ENCODE measurements at regions of chr1 and their contacts with region 1.

Region 1: DNA sequence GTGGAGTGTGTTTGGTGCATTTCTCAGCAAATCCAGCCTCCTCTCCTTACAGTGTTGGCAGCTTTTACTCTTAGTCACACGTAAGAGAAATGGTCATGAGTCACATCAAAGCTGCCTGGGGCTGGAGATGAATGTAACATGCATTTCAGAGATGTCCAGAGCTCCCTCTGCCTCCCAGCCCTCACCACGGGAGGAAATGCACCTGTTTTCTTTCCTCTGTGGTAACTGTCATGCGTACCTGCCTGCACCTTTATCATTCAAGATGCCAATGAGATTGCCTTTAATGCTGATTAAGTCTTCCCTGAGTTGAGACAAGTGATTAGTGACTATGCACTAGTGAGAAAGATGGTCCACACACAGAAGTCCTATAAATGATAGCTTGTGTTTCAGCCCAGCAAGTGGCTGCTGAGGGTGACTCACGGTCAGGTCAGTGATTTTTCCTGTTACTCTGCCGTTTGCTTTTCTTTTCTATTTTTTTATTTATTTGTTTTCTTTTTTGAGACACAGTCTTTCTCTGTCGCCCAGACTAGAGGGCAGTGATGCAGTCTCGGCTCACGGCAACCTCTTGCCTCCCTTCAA is 277.3 kb upstream of the FMN2 start:
- DNase-seq: peak; percentile 68
- H3K4me3 Mint-ChIP-seq: no peak overlapping the region
- H3K27ac Mint-ChIP-seq: no peak overlapping the region
- H3K4me1 Mint-ChIP-seq: peaks cover 29% of the 10 kb centered on the region
- H3K27me3 Mint-ChIP-seq: no peaks in the 10 kb centered on the region

Region 2: DNA sequence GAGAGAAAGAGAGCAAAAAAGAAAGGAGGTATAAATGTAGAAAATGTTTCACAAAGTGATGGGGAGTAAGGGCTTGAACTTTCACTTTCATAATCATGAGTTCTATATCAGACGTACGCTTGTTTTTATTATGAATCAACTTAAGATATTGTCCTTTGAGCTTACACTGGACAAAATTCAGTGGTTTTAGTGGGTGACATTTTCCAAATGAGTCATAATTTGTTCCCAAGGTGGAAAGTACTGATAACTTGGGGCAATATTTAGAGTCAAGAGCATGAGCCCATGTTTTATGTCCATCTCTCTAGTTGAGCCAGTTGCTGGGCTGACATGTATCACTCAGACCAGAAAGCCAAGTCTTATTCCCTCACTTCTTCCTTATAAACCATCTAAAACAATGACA is 266.4 kb before region 1 on chr1:
- CTCF ChIA-PET with region 1: no interaction called
- intact Hi-C with region 1: loop called (anchors 5 kb)
- DNase-seq: no peak
- H3K4me3 Mint-ChIP-seq: no peak overlapping the region
- H3K27ac Mint-ChIP-seq: no peak overlapping the region
- H3K4me1 Mint-ChIP-seq: peaks cover 17% of the 10 kb centered on the region
- H3K27me3 Mint-ChIP-seq: no peaks in the 10 kb centered on the region

Region 3: GRCh38 chr1:239707615-239708014 is 106.8 kb before region 1 on chr1:
- CTCF ChIA-PET with region 1: no interaction called
- intact Hi-C with region 1: loop called (anchors 2 kb)
- DNase-seq: no peak
- H3K4me3 Mint-ChIP-seq: no peak overlapping the region
- H3K27ac Mint-ChIP-seq: no peak overlapping the region
- H3K4me1 Mint-ChIP-seq: peaks cover 50% of the 10 kb centered on the region
- H3K27me3 Mint-ChIP-seq: no peaks in the 10 kb centered on the region

Region 4: DNA sequence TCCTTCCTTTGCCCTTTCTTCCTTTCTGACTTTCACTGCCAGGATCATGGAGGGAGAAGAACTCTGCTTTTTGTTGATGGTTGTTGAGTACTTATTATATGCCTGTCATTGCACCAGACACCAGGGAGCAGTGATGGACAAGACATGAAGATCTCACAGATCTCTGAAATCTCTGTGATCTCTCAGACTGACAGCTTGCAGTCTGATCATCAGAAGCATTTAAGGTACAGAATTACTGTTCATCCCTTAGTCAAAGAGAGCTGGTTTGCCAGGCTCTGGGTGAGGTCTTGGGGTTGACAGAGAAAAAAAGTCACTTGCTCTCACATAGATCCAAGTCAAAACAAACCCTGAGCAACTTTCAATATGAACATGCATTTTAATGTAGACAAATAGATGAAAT is 22.2 kb before region 1 on chr1:
- CTCF ChIA-PET with region 1: interaction called, 7 read pairs
- intact Hi-C with region 1: loop called (anchors 1 kb)
- DNase-seq: peak; percentile 46
- H3K4me3 Mint-ChIP-seq: no peak overlapping the region
- H3K27ac Mint-ChIP-seq: no peak overlapping the region
- H3K4me1 Mint-ChIP-seq: peaks cover 11% of the 10 kb centered on the region
- H3K27me3 Mint-ChIP-seq: no peaks in the 10 kb centered on the region

Measured in activated naive CD4-positive, alpha-beta T cell treated with anti-CD3 and anti-CD28 coated beads for 36 hours (primary cell).